ENCODE measurements at regions of chr7 and their contacts with region 1.

Region 1: GRCh38 chr7:15326044-15326644 is 235.7 kb downstream of the AGMO start:
- DNase-seq: no peak
- H3K4me3 ChIP-seq: no peak overlapping the region
- H3K27ac ChIP-seq: no peak overlapping the region
- H3K4me1 ChIP-seq: no peaks in the 10 kb centered on the region
- H3K27me3 ChIP-seq: no peaks in the 10 kb centered on the region
- CTCF ChIP-seq: peak; percentile 70

Region 2: GRCh38 chr7:15389073-15389472 is 62.9 kb after region 1 on chr7:
- intact Hi-C with region 1: no loop called
- DNase-seq: no peak
- H3K4me3 ChIP-seq: no peak overlapping the region
- H3K27ac ChIP-seq: no peak overlapping the region
- H3K4me1 ChIP-seq: no peaks in the 10 kb centered on the region
- H3K27me3 ChIP-seq: no peaks in the 10 kb centered on the region
- CTCF ChIP-seq: no peak

Region 3: DNA sequence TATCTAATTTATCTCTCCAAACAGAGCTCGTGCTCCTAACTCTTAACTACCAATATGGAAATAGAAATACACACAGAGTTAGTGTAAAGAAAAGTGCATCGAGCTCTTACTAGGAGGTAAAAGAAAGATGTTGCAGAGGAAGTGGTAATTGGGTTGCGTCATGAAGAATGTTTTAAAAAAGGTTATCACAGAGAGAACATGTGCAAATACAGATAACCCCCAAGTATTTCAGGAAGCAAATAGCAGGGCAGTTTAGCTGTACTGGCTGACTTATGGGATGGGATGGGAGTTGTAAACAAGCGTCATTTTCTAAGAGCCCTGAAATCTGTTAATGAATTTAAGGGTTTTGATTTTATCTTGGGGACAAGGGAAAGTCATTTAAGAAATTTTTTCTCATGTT is 81.8 kb after region 1 on chr7:
- intact Hi-C with region 1: no loop called
- DNase-seq: no peak
- H3K4me3 ChIP-seq: no peak overlapping the region
- H3K27ac ChIP-seq: no peak overlapping the region
- H3K4me1 ChIP-seq: no peaks in the 10 kb centered on the region
- H3K27me3 ChIP-seq: no peaks in the 10 kb centered on the region
- CTCF ChIP-seq: no peak

Region 4: DNA sequence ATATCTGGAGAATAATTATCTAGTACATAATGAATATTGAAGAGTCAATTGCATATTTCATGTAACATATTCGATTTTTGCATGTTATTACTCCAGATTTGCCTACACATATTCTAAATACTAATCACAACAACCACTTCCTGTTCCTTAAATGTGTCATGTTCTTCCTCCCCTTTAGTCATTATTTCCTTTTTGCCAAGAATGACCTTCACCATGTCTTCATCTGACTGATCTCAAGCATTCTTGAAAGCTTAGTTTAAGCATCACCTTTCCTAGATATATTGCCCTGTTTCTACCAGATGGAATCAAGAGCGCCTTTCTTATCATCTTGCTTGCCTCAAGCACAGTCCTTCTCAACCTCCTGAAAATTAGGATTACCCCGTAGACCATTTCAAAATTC is 383.8 kb after region 1 on chr7:
- intact Hi-C with region 1: loop called (anchors 10 kb)
- DNase-seq: no peak
- H3K4me3 ChIP-seq: no peak overlapping the region
- H3K27ac ChIP-seq: no peak overlapping the region
- H3K4me1 ChIP-seq: no peaks in the 10 kb centered on the region
- H3K27me3 ChIP-seq: no peaks in the 10 kb centered on the region
- CTCF ChIP-seq: no peak

Region 5: GRCh38 chr7:16071246-16071857 is 745.2 kb after region 1 on chr7:
- intact Hi-C with region 1: loop called (anchors 2 kb)
- DNase-seq: no peak
- H3K4me3 ChIP-seq: peak overlapping the region; percentile 29
- H3K27ac ChIP-seq: peak overlapping the region; percentile 86
- H3K4me1 ChIP-seq: peaks cover 24% of the 10 kb centered on the region
- H3K27me3 ChIP-seq: no peaks in the 10 kb centered on the region
- CTCF ChIP-seq: peak; percentile 91